CD4-positive, alpha-beta T cell (primary cell): ENCODE measurements at regions of chr12 and their contacts with region 1.

Region 1: GRCh38 chr12:132489602-132490239 is at the start of gene FBRSL1:
- DNase-seq: peak; percentile 92 to 98 (median 95)
- ATAC-seq: peak; percentile 76
- H3K4me3 ChIP-seq: peak within 1 kb of the TSS; percentile 80
- H3K4me3 Mint-ChIP-seq: peak within 1 kb of the TSS; percentile 91
- H3K27ac ChIP-seq: peak within 1 kb of the TSS; percentile 83 to 92
- H3K27ac Mint-ChIP-seq: peak within 1 kb of the TSS; percentile 97
- H3K4me1 ChIP-seq: peaks cover 70% of the 10 kb centered on the region
- H3K4me1 Mint-ChIP-seq: peaks cover 71% of the 10 kb centered on the region
- H3K27me3 ChIP-seq: no peaks in the 10 kb centered on the region
- H3K27me3 Mint-ChIP-seq: no peaks in the 10 kb centered on the region
- CTCF ChIP-seq: no peak
- total RNA-seq, gene FBRSL1: 75.8 to 80.7 TPM

Region 2: GRCh38 chr12:132437252-132437932 is 52.3 kb before region 1 on chr12:
- CTCF ChIA-PET with region 1: no interaction called
- POLR2A ChIA-PET with region 1: interaction called, 12 read pairs
- intact Hi-C with region 1: no loop called
- DNase-seq: peak in 2 of 14 experiments; percentile 30 to 31
- ATAC-seq: peak; percentile 39
- H3K4me3 ChIP-seq: peak overlapping the region; percentile 5
- H3K4me3 Mint-ChIP-seq: peak overlapping the region; percentile 51
- H3K27ac ChIP-seq: no peak overlapping the region
- H3K27ac Mint-ChIP-seq: peak overlapping the region; percentile 56
- H3K4me1 ChIP-seq: peaks cover 76% of the 10 kb centered on the region
- H3K4me1 Mint-ChIP-seq: peaks cover 36% of the 10 kb centered on the region
- H3K27me3 ChIP-seq: no peaks in the 10 kb centered on the region
- H3K27me3 Mint-ChIP-seq: no peaks in the 10 kb centered on the region
- CTCF ChIP-seq: no peak

Region 3: DNA sequence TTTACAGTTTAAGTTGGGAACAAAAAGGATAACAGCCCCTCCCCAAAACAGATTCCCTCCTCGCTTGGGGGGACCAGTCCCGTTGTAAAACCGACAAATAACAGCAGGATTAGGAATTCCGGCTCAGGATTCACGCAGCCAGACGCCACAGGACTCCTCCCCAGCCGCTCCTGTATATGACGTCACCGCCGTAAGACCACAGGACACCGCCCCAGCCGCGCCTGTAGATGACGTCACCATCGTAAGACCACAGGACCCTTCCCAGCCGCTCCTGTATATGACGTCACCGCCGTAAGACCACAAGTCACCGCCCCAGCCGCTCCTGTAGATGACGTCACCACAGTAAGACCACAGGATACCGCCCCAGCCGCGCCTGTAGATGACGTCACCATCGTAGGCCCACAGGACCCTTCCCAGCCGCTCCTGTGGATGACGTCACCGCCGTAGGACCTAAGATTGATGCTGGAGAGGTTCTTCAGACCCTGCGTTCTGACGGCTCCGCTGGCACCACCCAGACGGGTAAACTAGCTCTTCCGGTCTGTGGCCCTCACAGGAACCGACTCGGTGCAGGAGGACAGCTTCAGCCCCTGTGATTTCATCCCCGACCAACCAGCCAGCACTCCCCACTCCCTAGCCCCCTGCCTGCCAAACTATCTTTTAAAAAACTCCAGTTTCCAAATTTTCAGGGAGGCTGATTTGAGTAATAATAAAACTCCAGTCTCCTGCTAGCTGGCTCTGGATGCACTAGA is 43.7 kb before region 1 on chr12:
- CTCF ChIA-PET with region 1: no interaction called
- POLR2A ChIA-PET with region 1: interaction called, 34 read pairs
- intact Hi-C with region 1: loop called (anchors 2 to 5 kb)
- DNase-seq: peak in 13 of 14 experiments; percentile 26 to 93 (median 58)
- ATAC-seq: peak; percentile 35
- H3K4me3 ChIP-seq: peak overlapping the region; percentile 51
- H3K4me3 Mint-ChIP-seq: peak overlapping the region; percentile 90
- H3K27ac ChIP-seq: peak overlapping the region; percentile 92 to 96
- H3K27ac Mint-ChIP-seq: peak overlapping the region; percentile 95
- H3K4me1 ChIP-seq: peaks cover 74% of the 10 kb centered on the region
- H3K4me1 Mint-ChIP-seq: peaks cover 69% of the 10 kb centered on the region
- H3K27me3 ChIP-seq: no peaks in the 10 kb centered on the region
- H3K27me3 Mint-ChIP-seq: no peaks in the 10 kb centered on the region
- CTCF ChIP-seq: no peak

Region 4: GRCh38 chr12:132470978-132471857 is 18.5 kb before region 1 on chr12:
- CTCF ChIA-PET with region 1: no interaction called
- POLR2A ChIA-PET with region 1: interaction called, 69 read pairs
- intact Hi-C with region 1: loop called in 1 of 2 experiments (anchors 1 kb)
- DNase-seq: peak in 2 of 14 experiments; percentile 55 to 60
- ATAC-seq: peak; percentile 13
- H3K4me3 ChIP-seq: no peak overlapping the region
- H3K4me3 Mint-ChIP-seq: peak overlapping the region; percentile 70
- H3K27ac ChIP-seq: no peak overlapping the region
- H3K27ac Mint-ChIP-seq: peak overlapping the region; percentile 85
- H3K4me1 ChIP-seq: peaks cover 37% of the 10 kb centered on the region
- H3K4me1 Mint-ChIP-seq: peaks cover 50% of the 10 kb centered on the region
- H3K27me3 ChIP-seq: no peaks in the 10 kb centered on the region
- H3K27me3 Mint-ChIP-seq: no peaks in the 10 kb centered on the region
- CTCF ChIP-seq: no peak